ENCODE measurements at regions of chr22 and their contacts with region 1.

Region 1: DNA sequence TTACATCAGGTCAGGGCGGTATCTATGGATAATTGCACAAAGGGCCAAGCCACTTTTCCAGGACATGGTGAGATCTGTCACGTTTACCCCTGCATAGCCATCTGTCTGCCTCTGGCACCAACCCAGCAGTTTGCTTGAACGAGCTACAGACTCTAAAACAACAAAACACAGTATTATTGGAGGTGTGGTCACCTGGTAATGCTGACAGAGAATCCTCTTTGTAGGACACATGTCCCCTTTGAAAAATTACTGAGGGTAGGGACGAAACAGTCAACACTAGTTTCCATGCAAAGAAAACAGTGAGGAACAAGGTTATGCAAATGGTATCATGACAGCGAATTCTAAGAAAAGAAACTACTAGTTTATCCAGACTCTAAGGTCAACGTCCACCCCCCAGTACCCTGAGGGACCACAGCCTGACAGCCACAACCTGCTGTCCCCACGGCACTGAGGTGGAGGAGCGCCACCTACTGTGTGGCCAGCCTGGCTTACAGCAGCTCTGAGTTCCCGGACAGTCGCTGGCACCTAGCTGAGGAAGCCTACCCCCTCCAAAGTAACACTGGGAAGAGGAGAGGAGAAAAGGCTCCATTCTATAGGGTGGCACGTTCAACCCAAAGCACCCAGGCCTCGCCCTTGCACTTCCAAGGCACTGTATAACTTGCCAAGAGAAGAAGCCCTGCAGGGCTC is 117.4 kb upstream of the BID start:
- DNase-seq: no peak
- H3K4me3 ChIP-seq: no peak overlapping the region
- H3K27ac ChIP-seq: peak overlapping the region; percentile 66 to 77 (median 71)
- H3K4me1 ChIP-seq: peaks cover 0 to 27% (median 24%) of the 10 kb centered on the region in 4 donors
- H3K27me3 ChIP-seq: no peaks in the 10 kb centered on the region
- CTCF ChIP-seq: peak in 3 of 4 experiments; percentile 41 to 49 (median 47)
- EP300 ChIP-seq: no peak
- POLR2A ChIP-seq: no peak

Region 2: GRCh38 chr22:17830043-17830961 is 61.3 kb before region 1 on chr22:
- intact Hi-C with region 1: loop called (anchors 2 kb)
- DNase-seq: peak; percentile 93
- H3K4me3 ChIP-seq: no peak overlapping the region
- H3K27ac ChIP-seq: peak overlapping the region; percentile 69 to 85 (median 80)
- H3K4me1 ChIP-seq: peaks cover 0 to 34% (median 31%) of the 10 kb centered on the region in 4 donors
- H3K27me3 ChIP-seq: no peaks in the 10 kb centered on the region
- CTCF ChIP-seq: peak; percentile 99 to 100 (median 99)
- EP300 ChIP-seq: no peak
- POLR2A ChIP-seq: no peak

Region 3: GRCh38 chr22:17969701-17970113 is 78.1 kb after region 1 on chr22:
- intact Hi-C with region 1: no loop called
- DNase-seq: no peak
- H3K4me3 ChIP-seq: no peak overlapping the region
- H3K27ac ChIP-seq: peak overlapping the region; percentile 36 to 61 (median 54)
- H3K4me1 ChIP-seq: peaks cover 0 to 67% (median 46%) of the 10 kb centered on the region in 4 donors
- H3K27me3 ChIP-seq: no peaks in the 10 kb centered on the region
- CTCF ChIP-seq: no peak
- EP300 ChIP-seq: peak in 2 of 4 donors; percentile 18 to 33
- POLR2A ChIP-seq: no peak

Measured in sigmoid colon (tissue), 7 donors.